CD8-positive, alpha-beta memory T cell (primary cell): ENCODE measurements at regions of chr7 and their contacts with region 1.

Region 1: GRCh38 chr7:55641273-55641691 is 69.0 kb upstream of the VOPP1 start:
- DNase-seq: peak in 4 of 5 donors; percentile 14 to 54 (median 32)
- H3K4me3 ChIP-seq: no peak overlapping the region
- H3K4me3 Mint-ChIP-seq: no peak overlapping the region
- H3K27ac ChIP-seq: no peak overlapping the region
- H3K27ac Mint-ChIP-seq: no peak overlapping the region
- H3K4me1 ChIP-seq: peaks cover 7% of the 10 kb centered on the region
- H3K4me1 Mint-ChIP-seq: peaks cover 7 to 12% (median 10%) of the 10 kb centered on the region in 3 donors
- H3K27me3 ChIP-seq: no peaks in the 10 kb centered on the region
- H3K27me3 Mint-ChIP-seq: peaks cover 2 to 4% of the 10 kb centered on the region in 2 donors

Region 2: GRCh38 chr7:55964261-55965099 is 323.2 kb after region 1 on chr7 and contains the start of gene NIPSNAP2:
- CTCF ChIA-PET with region 1: interaction called, 10 read pairs
- POLR2A ChIA-PET with region 1: no interaction called
- DNase-seq: peak; percentile 49 to 68 (median 63)
- H3K4me3 ChIP-seq: peak within 1 kb of the TSS; percentile 63
- H3K4me3 Mint-ChIP-seq: peak within 1 kb of the TSS; percentile 81 to 92 (median 85)
- H3K27ac ChIP-seq: peak within 1 kb of the TSS; percentile 81
- H3K27ac Mint-ChIP-seq: peak within 1 kb of the TSS; percentile 69 to 96 (median 92)
- H3K4me1 ChIP-seq: peaks cover 10% of the 10 kb centered on the region
- H3K4me1 Mint-ChIP-seq: peaks cover 28 to 52% (median 50%) of the 10 kb centered on the region in 3 donors
- H3K27me3 ChIP-seq: no peaks in the 10 kb centered on the region
- H3K27me3 Mint-ChIP-seq: no peaks in the 10 kb centered on the region
- total RNA-seq, gene NIPSNAP2: 42.2 to 46.5 TPM